ENCODE measurements at regions of chr1 and their contacts with region 1.

Region 1: DNA sequence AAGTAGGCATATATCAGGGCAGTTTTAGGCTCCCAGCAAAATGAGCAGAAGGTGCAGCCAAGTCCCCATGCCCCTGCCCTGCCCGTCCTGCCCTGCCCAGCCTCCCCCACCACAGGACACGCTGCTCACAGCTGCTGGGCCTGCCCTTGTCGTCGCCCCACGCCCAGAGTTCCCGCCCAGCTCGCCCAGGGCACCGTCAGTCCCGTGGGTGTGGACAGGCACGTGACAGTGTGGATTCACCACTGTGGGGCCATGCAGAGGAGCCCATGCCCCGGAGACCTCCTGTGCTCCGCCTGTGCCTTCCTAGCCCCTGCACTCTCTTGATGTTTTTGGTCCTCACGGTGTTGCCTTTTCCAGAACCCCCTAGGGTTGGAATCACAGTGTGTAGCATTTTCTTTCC is 7.0 kb downstream of the FAAP20 start:
- DNase-seq: no peak
- H3K4me3 ChIP-seq: no peak overlapping the region
- H3K27ac ChIP-seq: no peak overlapping the region
- H3K4me1 ChIP-seq: peaks cover 14% of the 10 kb centered on the region
- H3K27me3 ChIP-seq: no peaks in the 10 kb centered on the region
- CTCF ChIP-seq: no peak
- POLR2A ChIP-seq: no peak

Region 2: DNA sequence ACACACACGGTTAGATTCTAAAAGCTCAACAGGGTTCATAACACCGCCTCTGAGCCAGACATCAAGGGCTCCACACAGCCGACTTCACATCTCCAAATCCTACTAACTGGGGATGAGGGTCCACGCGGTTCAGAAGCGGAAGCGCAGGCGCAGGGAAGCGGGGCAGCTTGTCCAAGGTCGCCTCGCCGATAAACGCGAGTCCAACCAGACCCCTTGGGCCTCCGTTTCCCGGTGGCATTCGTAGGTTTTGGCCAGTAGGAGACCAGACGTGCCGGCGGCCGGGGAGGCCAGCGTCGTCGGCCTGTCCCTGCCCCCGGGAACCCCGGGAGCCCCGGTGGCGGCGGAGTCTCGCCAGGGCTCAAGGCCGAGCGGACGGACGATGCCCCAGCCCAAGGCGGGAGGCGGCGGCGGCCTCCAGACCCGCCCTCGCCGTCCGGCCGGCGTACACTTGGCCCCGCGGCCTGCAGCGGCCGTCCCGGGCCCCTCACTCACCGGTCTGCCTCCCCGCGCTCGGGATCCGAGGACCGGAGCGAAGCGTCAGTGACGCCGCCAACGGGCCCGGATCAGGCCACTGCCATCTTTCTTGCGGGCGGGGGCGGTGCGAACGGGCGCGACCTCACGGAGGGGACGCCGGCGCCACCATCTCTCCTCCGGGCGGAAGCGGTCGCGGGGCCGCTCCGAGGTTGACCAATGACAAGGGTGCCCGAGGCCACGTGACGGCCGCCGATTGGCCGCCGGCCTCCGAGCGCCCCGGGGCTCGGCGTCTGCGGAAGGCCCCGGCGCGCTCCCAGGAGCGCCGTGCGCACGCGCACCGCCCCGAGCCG is 956.0 kb before region 1 on chr1 and contains the start of gene SDF4:
- intact Hi-C with region 1: no loop called
- DNase-seq: peak; percentile 96
- H3K4me3 ChIP-seq: peak within 1 kb of the TSS; percentile 78 to 95
- H3K27ac ChIP-seq: peak within 1 kb of the TSS; percentile 79 to 92
- H3K4me1 ChIP-seq: peaks cover 15% of the 10 kb centered on the region
- H3K27me3 ChIP-seq: no peaks in the 10 kb centered on the region
- CTCF ChIP-seq: peak in 1 of 4 experiments; percentile 7
- POLR2A ChIP-seq: peak; percentile 67
- total RNA-seq, gene SDF4: 177 to 185 TPM

Region 3: DNA sequence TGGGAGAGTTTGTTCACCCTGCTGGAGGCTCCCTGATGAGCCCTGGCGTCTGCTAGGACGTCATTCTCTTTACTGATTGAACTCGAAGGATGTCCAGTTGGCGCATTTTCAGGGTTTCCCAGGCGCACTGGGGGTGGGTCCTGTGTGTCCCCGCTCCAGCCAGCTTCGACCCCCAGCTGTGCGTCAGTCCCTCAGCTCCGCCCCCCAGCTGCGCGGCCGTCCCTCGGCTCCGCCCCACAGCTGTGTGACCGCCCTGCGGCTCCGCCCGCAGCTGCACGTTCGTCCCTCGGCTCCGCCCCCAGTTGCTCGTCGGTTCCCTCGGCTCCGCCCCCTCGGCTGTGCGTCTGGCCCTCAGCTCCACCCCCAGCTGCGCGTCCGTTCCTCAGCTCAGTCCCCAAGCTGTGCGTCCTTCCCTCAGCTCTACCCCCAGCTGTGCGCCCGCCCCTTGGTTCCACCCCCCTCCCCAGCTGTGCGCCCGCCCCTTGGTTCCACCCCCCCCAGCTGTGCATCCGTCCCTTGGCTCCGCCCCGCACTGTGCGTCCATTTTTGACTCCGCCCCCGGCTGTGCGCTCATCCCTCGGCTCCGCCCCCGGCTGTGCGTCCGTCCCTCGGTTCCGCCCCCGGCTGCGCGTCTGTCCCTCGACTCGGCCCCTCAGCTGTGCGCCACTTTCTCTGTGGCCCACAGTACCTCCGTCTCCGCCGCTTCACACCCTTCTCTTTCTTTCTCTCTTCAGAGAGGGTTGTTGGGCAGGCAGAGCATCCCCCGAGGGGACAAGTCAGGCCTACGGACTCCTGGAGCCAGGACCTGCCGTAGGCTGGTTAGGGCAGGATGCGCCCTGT is 54.4 kb before region 1 on chr1:
- intact Hi-C with region 1: loop called (anchors 2 kb)
- DNase-seq: peak; percentile 96
- H3K4me3 ChIP-seq: peak overlapping the region; percentile 29 to 35
- H3K27ac ChIP-seq: peak overlapping the region; percentile 82 to 96
- H3K4me1 ChIP-seq: peaks cover 19% of the 10 kb centered on the region
- H3K27me3 ChIP-seq: no peaks in the 10 kb centered on the region
- CTCF ChIP-seq: peak in 1 of 4 experiments; percentile 30
- POLR2A ChIP-seq: peak; percentile 62

Region 4: GRCh38 chr1:2151252-2151651 is 36.4 kb before region 1 on chr1:
- intact Hi-C with region 1: no loop called
- DNase-seq: no peak
- H3K4me3 ChIP-seq: no peak overlapping the region
- H3K27ac ChIP-seq: no peak overlapping the region
- H3K4me1 ChIP-seq: no peaks in the 10 kb centered on the region
- H3K27me3 ChIP-seq: no peaks in the 10 kb centered on the region
- CTCF ChIP-seq: no peak
- POLR2A ChIP-seq: no peak

Region 5: GRCh38 chr1:2227346-2228153 is 39.9 kb after region 1 on chr1:
- intact Hi-C with region 1: no loop called
- DNase-seq: peak; percentile 95
- H3K4me3 ChIP-seq: peak overlapping the region; percentile 76 to 81
- H3K27ac ChIP-seq: peak overlapping the region; percentile 98
- H3K4me1 ChIP-seq: peaks cover 12% of the 10 kb centered on the region
- H3K27me3 ChIP-seq: no peaks in the 10 kb centered on the region
- CTCF ChIP-seq: peak in 2 of 4 experiments; percentile 27 to 41
- POLR2A ChIP-seq: peak; percentile 78

Measured in prostate gland (tissue), 2 donors.